ENCODE measurements at regions of chr12 and their contacts with region 1.

Region 1: GRCh38 chr12:18320036-18320617 is 58.8 kb downstream of the PIK3C2G start:
- DNase-seq: peak; percentile 51

Region 2: DNA sequence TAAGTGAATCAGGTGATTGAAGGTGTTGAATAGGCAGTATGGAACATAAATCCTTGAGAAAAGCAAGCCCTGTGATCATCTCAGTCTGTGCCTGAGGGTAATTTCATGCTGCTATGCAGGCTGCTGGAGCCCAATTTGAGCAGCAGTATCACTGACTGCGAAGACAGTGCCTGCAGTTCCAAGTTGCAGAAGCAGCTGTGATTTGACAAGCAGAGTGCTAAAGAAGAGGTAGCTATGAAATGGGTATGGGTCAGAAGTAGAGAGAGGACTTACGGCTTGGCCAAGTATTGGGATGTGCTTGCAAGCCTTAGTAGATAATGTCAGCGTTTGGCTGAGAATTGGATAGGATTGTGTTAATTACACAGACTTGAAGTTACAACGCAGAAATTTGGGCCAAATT is 36.3 kb before region 1 on chr12:
- CTCF ChIA-PET with region 1: no interaction called
- POLR2A ChIA-PET with region 1: no interaction called
- DNase-seq: no peak

Region 3: GRCh38 chr12:18306311-18306710 is 13.8 kb before region 1 on chr12:
- CTCF ChIA-PET with region 1: interaction called, 14 read pairs
- POLR2A ChIA-PET with region 1: no interaction called
- DNase-seq: no peak

Region 4: DNA sequence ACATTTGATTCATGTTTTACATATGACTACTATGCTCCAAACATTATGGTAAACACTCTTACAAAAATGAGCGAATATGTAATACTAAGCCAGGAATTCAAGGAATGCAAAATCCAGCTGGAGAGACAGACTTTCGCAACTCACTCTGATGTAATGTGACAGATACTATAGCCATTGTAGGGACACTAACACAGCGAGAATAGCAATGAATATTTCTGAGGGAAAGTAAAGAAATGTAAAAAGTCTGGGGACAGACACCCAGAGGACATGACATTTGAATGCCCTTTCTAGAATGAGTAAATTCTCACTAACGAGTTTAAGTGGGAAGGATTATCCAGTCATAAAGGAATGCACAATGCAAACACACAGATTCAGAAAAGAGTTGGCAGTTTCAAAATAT is 63.1 kb after region 1 on chr12:
- CTCF ChIA-PET with region 1: no interaction called
- POLR2A ChIA-PET with region 1: no interaction called
- DNase-seq: no peak